Upper lobe of right lung (tissue), 1 donor: ENCODE measurements at regions of chr14 and their contacts with region 1.

Region 1: DNA sequence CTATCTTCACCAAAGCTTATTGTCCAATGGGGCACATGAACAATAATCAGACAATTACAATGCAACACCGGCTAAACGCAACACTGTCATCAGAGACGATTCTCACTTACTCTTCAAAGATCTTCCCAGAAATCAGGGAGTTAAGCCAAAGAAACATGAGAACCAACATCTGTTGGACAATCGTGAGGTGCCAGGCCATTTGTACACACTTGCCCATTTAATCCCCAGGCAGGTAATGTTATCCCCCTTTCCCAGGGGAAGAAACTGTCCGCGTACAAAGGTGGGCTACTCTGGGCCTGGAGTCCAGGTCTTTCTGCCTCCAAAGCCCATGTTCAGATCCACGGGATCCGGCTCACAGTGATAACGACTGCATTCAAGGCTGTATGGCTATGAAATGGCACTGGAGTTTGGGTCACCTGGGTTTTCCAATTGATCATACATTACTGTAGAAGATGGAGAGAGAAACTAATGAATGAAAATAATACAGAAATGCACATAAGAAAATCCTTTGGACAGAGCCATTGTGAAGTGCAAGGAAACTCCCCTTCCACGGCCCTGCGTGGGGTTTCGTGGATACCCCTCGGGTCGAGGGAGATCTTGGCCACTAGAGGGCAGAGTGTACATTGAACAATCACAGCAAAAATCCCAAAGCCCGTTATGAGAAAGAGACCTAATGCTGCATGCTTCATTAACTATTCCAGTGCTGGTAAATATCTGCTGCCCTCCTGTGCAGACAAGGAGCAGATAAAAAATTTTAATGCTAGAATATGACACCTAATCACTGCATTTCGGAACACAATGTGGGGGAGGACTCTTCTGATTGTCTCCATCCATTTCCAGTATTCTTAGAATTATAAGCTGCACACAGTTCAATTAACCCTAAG is 111.4 kb downstream of the EGLN3 start:
- DNase-seq: no peak
- ATAC-seq: peak; percentile 83
- H3K4me3 ChIP-seq: no peak overlapping the region
- H3K27ac ChIP-seq: no peak overlapping the region
- H3K4me1 ChIP-seq: no peaks in the 10 kb centered on the region
- H3K27me3 ChIP-seq: no peaks in the 10 kb centered on the region
- CTCF ChIP-seq: peak; percentile 87

Region 2: DNA sequence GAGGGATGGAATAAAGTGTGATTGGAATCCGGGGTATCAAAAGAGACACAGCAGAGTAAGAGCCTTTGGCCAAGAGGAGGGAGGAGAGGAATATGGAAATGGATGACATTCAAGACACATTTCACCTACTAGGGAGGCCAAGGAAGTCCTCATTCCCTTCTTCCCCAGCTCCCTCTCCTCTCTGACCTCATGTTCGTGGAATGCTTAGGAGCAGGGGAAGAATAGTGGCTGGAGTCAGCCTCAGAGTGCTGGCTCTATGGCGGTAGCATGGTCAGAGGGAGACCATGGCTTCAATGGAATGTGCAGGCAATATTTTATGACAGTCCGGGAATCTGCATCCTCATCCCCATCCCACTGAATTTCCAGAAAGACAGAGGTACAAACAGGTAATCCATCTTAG is 85.2 kb before region 1 on chr14:
- intact Hi-C with region 1: no loop called
- DNase-seq: no peak
- ATAC-seq: no peak
- H3K4me3 ChIP-seq: no peak overlapping the region
- H3K27ac ChIP-seq: no peak overlapping the region
- H3K4me1 ChIP-seq: no peaks in the 10 kb centered on the region
- H3K27me3 ChIP-seq: peaks cover 7% of the 10 kb centered on the region
- CTCF ChIP-seq: no peak

Region 3: DNA sequence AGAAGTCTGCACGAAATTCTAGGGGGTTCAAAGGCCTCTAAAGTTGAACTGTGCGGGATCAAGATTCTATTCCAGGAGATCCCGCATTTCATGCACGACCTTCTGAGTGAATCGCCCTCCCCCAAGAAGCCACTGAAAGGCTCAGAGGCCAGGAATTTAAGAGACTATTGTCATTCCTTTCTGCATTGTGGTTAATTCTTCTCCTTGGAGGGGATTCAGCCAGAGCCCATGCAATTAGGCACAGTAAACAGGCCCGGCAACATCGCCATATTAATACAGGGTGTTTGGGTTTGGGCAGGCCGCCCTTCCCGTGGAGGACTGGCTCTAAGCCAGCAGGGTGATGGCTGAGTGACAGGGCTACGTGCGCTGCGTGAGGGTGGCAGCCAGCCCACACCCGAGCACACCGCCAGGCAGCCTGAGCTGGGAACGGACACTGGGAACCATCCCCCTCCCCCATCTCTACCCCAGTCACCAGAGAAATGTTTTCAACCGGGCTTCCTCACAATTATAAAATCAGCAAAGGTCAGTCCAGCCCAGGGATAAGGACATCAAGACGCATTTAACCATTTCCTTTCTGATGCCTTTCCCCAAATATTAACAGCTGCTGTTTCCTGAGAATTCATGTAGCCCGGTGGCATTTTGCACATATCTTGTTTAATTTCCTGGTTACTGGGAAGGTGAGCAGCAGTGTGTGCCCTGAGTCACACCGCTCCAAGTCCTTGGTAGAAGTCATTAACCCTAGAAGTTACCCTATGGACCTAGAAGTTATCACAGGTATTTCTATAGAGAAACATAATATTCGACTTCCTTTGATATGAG is 98.9 kb after region 1 on chr14:
- intact Hi-C with region 1: no loop called
- DNase-seq: no peak
- ATAC-seq: peak; percentile 64
- H3K4me3 ChIP-seq: peak overlapping the region; percentile 7
- H3K27ac ChIP-seq: no peak overlapping the region
- H3K4me1 ChIP-seq: peaks cover 3% of the 10 kb centered on the region
- H3K27me3 ChIP-seq: peaks cover 3% of the 10 kb centered on the region
- CTCF ChIP-seq: no peak

Region 4: DNA sequence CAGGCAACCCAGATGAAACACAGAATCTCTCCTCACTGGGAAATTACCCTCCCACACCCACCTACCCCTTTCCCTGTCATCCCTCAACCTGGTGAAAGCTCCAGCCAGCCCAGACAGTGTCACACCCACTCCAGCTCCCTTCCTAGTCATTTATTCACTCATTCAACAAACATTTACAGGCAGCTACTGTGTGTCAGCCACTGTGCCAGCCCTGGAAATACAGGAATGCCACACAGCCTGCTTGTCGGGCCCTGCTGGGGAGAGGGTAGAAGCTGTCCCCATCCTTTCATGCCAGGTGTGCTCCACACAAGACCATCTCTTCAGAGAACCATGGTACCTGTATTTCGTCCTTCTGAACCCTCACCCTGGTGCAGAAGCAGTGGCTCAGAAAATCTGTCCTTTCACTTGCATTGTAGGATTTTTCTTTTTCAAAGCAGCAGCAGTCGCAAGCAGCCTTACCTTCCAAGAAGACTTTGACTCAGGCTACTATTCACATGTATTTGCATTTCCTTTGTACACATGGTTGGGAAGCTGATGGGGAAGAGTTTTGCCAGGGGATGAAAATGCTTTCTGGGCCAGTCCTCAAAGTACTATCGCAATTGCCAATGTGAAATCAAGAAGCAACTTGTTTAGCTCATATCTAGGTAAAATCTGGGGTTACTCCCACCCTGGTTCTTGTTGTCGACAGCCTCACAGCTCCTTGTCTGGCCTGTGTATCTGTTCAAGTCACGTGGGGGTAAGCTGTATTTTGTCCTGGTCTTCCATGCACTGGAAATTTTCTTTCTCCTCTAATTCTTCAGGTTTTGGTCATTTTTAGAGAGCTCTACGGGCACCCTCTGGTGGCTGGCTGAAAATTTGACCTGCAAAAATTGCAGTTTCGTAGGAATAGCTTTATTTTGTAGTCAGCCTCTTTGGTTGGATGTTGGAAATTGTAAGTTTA is 258.9 kb after region 1 on chr14:
- intact Hi-C with region 1: loop called (anchors 10 kb)
- DNase-seq: no peak
- ATAC-seq: peak; percentile 20
- H3K4me3 ChIP-seq: no peak overlapping the region
- H3K27ac ChIP-seq: no peak overlapping the region
- H3K4me1 ChIP-seq: no peaks in the 10 kb centered on the region
- H3K27me3 ChIP-seq: no peaks in the 10 kb centered on the region
- CTCF ChIP-seq: peak; percentile 50

Region 5: DNA sequence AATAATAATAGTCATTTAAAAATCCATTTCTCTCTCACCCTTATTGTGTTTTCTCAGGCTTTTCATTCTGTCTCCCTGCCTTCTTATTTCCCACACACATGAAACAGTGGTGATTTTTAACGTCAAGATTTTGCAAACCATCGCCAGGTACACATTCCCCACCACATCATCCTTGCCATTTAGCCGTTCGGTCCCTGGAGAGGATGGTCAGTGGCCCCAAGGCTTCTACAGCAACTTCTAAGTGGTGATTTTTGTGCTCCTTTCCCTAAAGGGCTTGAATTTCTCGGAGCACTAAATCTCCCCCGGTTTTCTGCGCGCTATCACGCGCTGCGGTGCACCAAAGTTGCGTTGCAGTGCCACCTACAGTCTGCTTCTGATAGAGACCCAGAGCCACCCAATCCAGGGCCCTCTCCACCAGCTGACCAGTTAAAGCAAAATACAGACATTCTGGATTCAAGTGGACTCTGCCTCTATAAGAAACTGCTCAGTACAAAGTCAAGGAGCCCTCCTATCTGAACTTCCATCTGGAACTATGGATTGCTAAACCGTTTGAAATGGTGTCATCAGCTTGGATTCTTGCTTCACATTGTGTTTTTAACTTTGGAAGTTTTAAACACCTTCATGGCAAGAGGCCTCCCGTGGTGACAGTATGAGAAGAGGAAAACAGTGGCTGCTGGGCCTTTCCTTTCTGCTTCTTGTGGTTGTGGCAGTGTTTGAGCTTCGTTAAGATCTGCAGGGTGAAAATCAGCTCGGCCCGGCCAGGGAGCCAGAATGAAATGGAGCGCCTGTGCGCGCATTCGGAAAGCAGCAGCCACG is 388.6 kb after region 1 on chr14:
- intact Hi-C with region 1: loop called (anchors 10 kb)
- DNase-seq: peak; percentile 68
- ATAC-seq: peak; percentile 95
- H3K4me3 ChIP-seq: no peak overlapping the region
- H3K27ac ChIP-seq: no peak overlapping the region
- H3K4me1 ChIP-seq: no peaks in the 10 kb centered on the region
- H3K27me3 ChIP-seq: no peaks in the 10 kb centered on the region
- CTCF ChIP-seq: peak; percentile 80